ENCODE measurements at regions of chr13 and their contacts with region 1.

Region 1: GRCh38 chr13:112722433-112723250 is 32.8 kb downstream of the ATP11A start:
- DNase-seq: peak; percentile 91 to 94
- H3K4me3 ChIP-seq: no peak overlapping the region
- H3K4me3 Mint-ChIP-seq: peak overlapping the region; percentile 76
- H3K27ac Mint-ChIP-seq: peak overlapping the region; percentile 98
- H3K4me1 ChIP-seq: peaks cover 68% of the 10 kb centered on the region
- H3K4me1 Mint-ChIP-seq: peaks cover 69% of the 10 kb centered on the region
- H3K27me3 ChIP-seq: no peaks in the 10 kb centered on the region
- H3K27me3 Mint-ChIP-seq: no peaks in the 10 kb centered on the region
- CTCF ChIP-seq: no peak

Region 2: GRCh38 chr13:112697746-112698655 is 24.6 kb before region 1 on chr13:
- CTCF ChIA-PET with region 1: no interaction called
- POLR2A ChIA-PET with region 1: no interaction called
- intact Hi-C with region 1: no loop called
- DNase-seq: peak in 1 of 2 experiments; percentile 20
- H3K4me3 ChIP-seq: no peak overlapping the region
- H3K4me3 Mint-ChIP-seq: no peak overlapping the region
- H3K27ac Mint-ChIP-seq: peak overlapping the region; percentile 72
- H3K4me1 ChIP-seq: peaks cover 25% of the 10 kb centered on the region
- H3K4me1 Mint-ChIP-seq: peaks cover 34% of the 10 kb centered on the region
- H3K27me3 ChIP-seq: no peaks in the 10 kb centered on the region
- H3K27me3 Mint-ChIP-seq: no peaks in the 10 kb centered on the region
- CTCF ChIP-seq: no peak

Region 3: DNA sequence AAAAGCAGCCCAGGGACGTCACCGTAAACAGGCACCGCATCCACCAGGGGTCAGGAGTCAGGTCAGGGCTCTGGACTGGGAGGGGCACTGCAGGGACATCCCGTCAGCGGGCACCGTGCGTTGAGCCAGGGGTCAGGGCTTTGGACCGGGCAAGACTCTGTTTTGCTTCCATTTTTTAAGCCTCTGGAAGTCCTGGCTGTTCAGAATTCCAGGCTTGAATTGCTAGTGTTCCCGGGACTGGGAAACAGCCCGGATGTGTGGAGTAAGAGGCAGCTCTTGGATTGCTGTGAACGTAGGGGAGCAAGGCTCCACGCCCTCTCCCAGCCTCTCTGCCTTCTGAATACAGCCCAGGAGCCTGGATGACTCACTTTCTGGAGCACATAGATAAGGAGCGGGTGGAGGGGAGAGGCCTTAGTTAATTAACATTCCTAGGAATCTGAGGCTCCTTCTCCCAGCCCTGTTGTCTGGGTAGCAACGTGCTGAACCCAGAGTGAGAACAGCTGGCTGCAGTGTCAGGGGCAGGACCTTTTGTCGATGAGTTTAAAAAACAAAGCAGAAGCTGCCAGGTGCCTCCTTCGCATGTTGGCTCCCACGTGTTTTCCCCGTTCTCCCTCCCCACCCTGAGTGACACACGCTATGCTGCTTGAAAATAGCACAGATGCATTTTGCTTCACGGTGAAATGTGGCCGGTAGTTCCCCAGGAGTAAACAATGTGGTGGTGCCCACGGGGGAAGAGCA is 10.9 kb before region 1 on chr13:
- CTCF ChIA-PET with region 1: interaction called, 3 read pairs
- POLR2A ChIA-PET with region 1: no interaction called
- intact Hi-C with region 1: loop called (anchors 1 kb)
- DNase-seq: peak; percentile 88 to 94
- H3K4me3 ChIP-seq: peak overlapping the region; percentile 23
- H3K4me3 Mint-ChIP-seq: peak overlapping the region; percentile 73
- H3K27ac Mint-ChIP-seq: peak overlapping the region; percentile 89
- H3K4me1 ChIP-seq: peaks cover 70% of the 10 kb centered on the region
- H3K4me1 Mint-ChIP-seq: peaks cover 57% of the 10 kb centered on the region
- H3K27me3 ChIP-seq: no peaks in the 10 kb centered on the region
- H3K27me3 Mint-ChIP-seq: no peaks in the 10 kb centered on the region
- CTCF ChIP-seq: peak; percentile 36 to 69

Region 4: DNA sequence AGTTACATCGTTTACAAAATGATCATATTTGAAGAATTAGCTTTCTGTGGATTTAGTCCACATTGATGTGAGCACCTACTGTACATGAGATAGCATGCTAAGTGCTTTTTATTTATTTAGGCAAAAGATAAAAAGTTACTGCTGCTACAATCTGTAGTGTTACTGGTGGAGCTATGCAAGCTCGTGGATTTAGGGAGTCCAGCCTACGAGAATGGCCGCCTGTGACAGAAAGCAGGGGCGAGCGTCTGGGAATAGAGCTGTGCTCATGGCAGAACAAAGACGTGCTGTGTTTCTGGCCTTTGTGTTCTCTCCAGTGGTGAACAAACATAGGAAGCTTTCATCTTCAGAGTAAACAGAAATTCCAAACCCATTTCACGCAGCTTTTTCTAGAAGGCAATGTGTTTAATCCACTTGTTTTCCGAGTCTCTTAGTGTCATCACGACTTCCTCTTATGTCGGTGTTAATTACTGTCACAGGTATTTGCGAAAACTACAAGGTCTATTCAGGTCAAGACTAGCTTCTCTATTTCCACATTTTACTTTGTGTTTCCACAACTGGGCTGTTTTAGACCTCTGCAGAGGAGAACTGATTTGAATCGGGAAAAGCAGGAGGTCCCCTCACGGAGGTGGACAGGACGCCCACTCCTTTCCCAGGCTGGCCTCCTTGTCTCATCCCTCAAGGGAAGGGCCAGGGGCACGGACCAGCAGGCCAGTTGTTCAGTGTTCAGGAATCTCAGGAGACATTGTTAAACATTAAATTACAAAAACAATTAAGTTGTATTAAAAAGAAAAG is 34.5 kb after region 1 on chr13:
- CTCF ChIA-PET with region 1: no interaction called
- POLR2A ChIA-PET with region 1: no interaction called
- intact Hi-C with region 1: loop called (anchors 2 kb)
- DNase-seq: peak in 1 of 2 experiments; percentile 56
- H3K4me3 ChIP-seq: no peak overlapping the region
- H3K4me3 Mint-ChIP-seq: peak overlapping the region; percentile 13
- H3K27ac Mint-ChIP-seq: peak overlapping the region; percentile 83
- H3K4me1 ChIP-seq: peaks cover 26% of the 10 kb centered on the region
- H3K4me1 Mint-ChIP-seq: peaks cover 10% of the 10 kb centered on the region
- H3K27me3 ChIP-seq: no peaks in the 10 kb centered on the region
- H3K27me3 Mint-ChIP-seq: no peaks in the 10 kb centered on the region
- CTCF ChIP-seq: no peak

Region 5: GRCh38 chr13:113064534-113065405 is 342.1 kb after region 1 on chr13:
- CTCF ChIA-PET with region 1: no interaction called
- POLR2A ChIA-PET with region 1: no interaction called
- intact Hi-C with region 1: no loop called
- DNase-seq: no peak
- H3K4me3 ChIP-seq: no peak overlapping the region
- H3K4me3 Mint-ChIP-seq: no peak overlapping the region
- H3K27ac Mint-ChIP-seq: no peak overlapping the region
- H3K4me1 ChIP-seq: no peaks in the 10 kb centered on the region
- H3K4me1 Mint-ChIP-seq: no peaks in the 10 kb centered on the region
- H3K27me3 ChIP-seq: no peaks in the 10 kb centered on the region
- H3K27me3 Mint-ChIP-seq: no peaks in the 10 kb centered on the region
- CTCF ChIP-seq: no peak

Region 6: GRCh38 chr13:113178070-113178895 is 455.6 kb after region 1 on chr13:
- CTCF ChIA-PET with region 1: no interaction called
- POLR2A ChIA-PET with region 1: no interaction called
- intact Hi-C with region 1: no loop called
- DNase-seq: no peak
- H3K4me3 ChIP-seq: no peak overlapping the region
- H3K4me3 Mint-ChIP-seq: no peak overlapping the region
- H3K27ac Mint-ChIP-seq: no peak overlapping the region
- H3K4me1 ChIP-seq: no peaks in the 10 kb centered on the region
- H3K4me1 Mint-ChIP-seq: no peaks in the 10 kb centered on the region
- H3K27me3 ChIP-seq: no peaks in the 10 kb centered on the region
- H3K27me3 Mint-ChIP-seq: no peaks in the 10 kb centered on the region
- CTCF ChIP-seq: no peak

Region 7: GRCh38 chr13:113238536-113238935 is 515.9 kb after region 1 on chr13:
- CTCF ChIA-PET with region 1: no interaction called
- POLR2A ChIA-PET with region 1: no interaction called
- intact Hi-C with region 1: no loop called
- DNase-seq: no peak
- H3K4me3 ChIP-seq: no peak overlapping the region
- H3K4me3 Mint-ChIP-seq: no peak overlapping the region
- H3K27ac Mint-ChIP-seq: no peak overlapping the region
- H3K4me1 ChIP-seq: no peaks in the 10 kb centered on the region
- H3K4me1 Mint-ChIP-seq: no peaks in the 10 kb centered on the region
- H3K27me3 ChIP-seq: no peaks in the 10 kb centered on the region
- H3K27me3 Mint-ChIP-seq: no peaks in the 10 kb centered on the region
- CTCF ChIP-seq: no peak

Measured in Caco-2 (cell line).